ENCODE measurements at regions of chr13 and their contacts with region 1.

Region 1: DNA sequence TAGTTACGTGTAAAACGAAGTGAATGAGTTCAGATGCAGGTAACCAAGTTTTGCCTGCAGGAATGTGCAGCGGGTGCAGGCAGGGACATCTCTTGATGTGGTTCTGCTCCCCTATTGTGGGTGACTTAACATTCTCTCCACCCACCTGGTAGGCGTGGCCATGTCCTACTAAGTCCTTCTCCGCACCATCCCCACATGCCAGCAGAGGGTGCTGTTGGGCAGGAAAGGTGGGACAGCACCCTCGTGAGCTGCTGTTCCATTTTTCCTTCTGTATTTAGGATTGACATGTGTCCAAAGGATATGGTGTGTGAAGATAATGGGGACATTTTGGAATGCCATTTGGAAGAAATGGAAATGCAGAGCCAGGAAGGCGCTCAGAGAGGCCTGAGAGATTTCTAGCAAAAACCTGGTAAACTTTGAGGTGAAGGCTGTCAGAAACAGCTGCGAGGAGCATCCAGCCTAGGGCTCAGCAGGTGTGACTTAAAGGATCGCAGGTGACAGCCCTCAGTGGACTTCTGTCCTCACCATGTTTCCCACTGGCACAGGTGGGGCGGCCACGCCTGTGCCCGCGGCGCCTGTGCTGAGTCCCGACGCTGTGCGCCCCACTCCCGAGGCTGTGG is 26.2 kb upstream of the MCF2L start:
- DNase-seq: peak; percentile 91
- ATAC-seq: peak; percentile 95
- H3K4me3 ChIP-seq: peak overlapping the region; percentile 2; the same call in 1 of the 2 replicates
- H3K27ac ChIP-seq: no peak overlapping the region
- H3K4me1 ChIP-seq: no peaks in the 10 kb centered on the region
- H3K27me3 ChIP-seq: peaks cover 42% of the 10 kb centered on the region
- CTCF ChIP-seq: peak; percentile 97
- POLR2A ChIP-seq: no peak; the same call in 1 of the 2 replicates
- RAD21 ChIP-seq: peak; percentile 93

Region 2: GRCh38 chr13:112917056-112917664 is 25.6 kb before region 1 on chr13:
- CTCF ChIA-PET with region 1: interaction called, 10 read pairs
- POLR2A ChIA-PET with region 1: no interaction called
- dilution Hi-C with region 1: no loop called
- in situ Hi-C with region 1: no loop called
- intact Hi-C with region 1: no loop called
- DNase-seq: no peak
- ATAC-seq: no peak
- H3K4me3 ChIP-seq: no peak overlapping the region
- H3K27ac ChIP-seq: no peak overlapping the region
- H3K4me1 ChIP-seq: no peaks in the 10 kb centered on the region
- H3K27me3 ChIP-seq: peaks cover 50% of the 10 kb centered on the region
- CTCF ChIP-seq: no peak
- POLR2A ChIP-seq: no peak
- RAD21 ChIP-seq: no peak

Region 3: GRCh38 chr13:113029487-113030258 is 86.9 kb after region 1 on chr13:
- CTCF ChIA-PET with region 1: interaction called, 4 read pairs
- POLR2A ChIA-PET with region 1: no interaction called
- dilution Hi-C with region 1: no loop called
- in situ Hi-C with region 1: no loop called
- intact Hi-C with region 1: loop called (anchors 1 kb)
- DNase-seq: no peak
- ATAC-seq: peak; percentile 86
- H3K4me3 ChIP-seq: no peak overlapping the region
- H3K27ac ChIP-seq: no peak overlapping the region
- H3K4me1 ChIP-seq: no peaks in the 10 kb centered on the region
- H3K27me3 ChIP-seq: peaks cover 27% of the 10 kb centered on the region
- CTCF ChIP-seq: peak; percentile 66
- POLR2A ChIP-seq: no peak
- RAD21 ChIP-seq: peak; percentile 48

Region 4: DNA sequence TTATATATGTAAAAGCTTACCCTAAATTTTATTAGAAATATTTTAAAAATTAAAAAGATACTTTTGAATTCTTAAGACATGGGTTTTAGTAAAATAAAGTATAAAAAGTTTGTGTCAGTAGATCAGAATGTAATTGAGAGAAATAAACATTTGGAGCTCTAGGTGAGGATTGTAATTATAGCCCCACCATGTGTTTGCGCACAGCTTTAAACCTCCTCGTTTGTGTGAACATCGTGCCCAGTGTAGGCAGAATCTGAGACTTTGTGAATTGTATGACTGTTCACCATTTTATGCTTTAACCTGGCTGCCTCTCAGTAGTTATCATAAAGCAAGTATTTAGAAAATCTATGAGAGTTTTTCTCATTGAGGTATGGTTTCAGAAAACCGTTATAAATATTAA is 295.7 kb after region 1 on chr13:
- CTCF ChIA-PET with region 1: no interaction called
- POLR2A ChIA-PET with region 1: no interaction called
- dilution Hi-C with region 1: no loop called
- in situ Hi-C with region 1: loop called (anchors 25 kb)
- intact Hi-C with region 1: loop called (anchors 10 kb)
- DNase-seq: no peak
- ATAC-seq: peak; percentile 35; the same call in 1 of the 2 replicates
- H3K4me3 ChIP-seq: no peak overlapping the region
- H3K27ac ChIP-seq: no peak overlapping the region
- H3K4me1 ChIP-seq: no peaks in the 10 kb centered on the region
- H3K27me3 ChIP-seq: no peaks in the 10 kb centered on the region
- CTCF ChIP-seq: peak; percentile 28
- POLR2A ChIP-seq: no peak
- RAD21 ChIP-seq: peak; percentile 20; the same call in 1 of the 2 replicates

Region 5: DNA sequence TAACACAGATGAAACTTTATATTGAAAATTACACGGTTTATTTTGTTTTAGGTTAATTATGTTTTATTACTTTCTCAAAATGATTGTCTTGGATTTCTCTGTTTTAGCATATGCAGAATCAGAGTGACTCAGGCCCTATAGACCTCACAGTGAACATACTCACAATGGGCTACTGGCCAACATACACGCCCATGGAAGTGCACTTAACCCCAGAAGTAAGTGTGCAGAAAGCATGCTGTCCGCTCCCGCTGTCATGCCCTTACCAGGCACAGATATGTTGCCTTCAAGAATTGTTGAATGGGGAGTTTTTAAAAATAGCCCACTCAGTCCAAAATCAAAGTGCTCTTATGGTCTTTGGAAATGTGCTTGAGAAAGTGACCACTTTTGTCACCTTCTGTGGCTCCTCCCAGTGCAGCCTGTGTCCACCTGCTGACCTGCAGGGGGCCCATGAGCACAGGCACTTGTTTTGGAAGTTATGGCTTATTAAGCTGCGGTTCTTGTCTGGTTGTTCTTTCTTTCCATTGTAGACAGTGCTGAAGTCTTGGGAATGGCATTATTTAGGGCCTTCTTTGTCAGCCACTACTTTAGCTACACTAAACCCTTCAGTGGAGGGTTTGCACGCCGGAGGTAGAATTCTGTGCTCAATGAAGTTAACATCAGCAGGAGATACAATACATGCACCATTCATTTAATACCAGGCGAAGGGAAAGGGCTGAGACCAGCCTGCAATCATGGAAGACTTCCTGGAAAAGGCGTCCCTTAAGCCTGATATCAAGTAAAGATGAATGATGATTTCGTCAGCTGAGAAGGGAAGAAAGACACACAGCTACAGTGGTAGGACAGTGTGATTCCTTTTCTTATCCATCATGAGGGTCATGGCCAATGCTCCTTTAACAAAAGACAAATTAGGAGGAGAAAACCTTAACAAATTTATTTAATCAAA is 303.3 kb after region 1 on chr13:
- CTCF ChIA-PET with region 1: no interaction called
- POLR2A ChIA-PET with region 1: no interaction called
- dilution Hi-C with region 1: no loop called
- in situ Hi-C with region 1: loop called (anchors 25 kb)
- intact Hi-C with region 1: no loop called
- DNase-seq: peak; percentile 13
- ATAC-seq: no peak
- H3K4me3 ChIP-seq: no peak overlapping the region
- H3K27ac ChIP-seq: no peak overlapping the region
- H3K4me1 ChIP-seq: no peaks in the 10 kb centered on the region
- H3K27me3 ChIP-seq: no peaks in the 10 kb centered on the region
- CTCF ChIP-seq: 0 out of 2 replicates have a peak, but pooled peaks have one; percentile 16
- POLR2A ChIP-seq: no peak
- RAD21 ChIP-seq: 0 out of 2 replicates have a peak, but pooled peaks have one; percentile 13

Region 6: GRCh38 chr13:113320226-113320875 is 377.6 kb after region 1 on chr13:
- CTCF ChIA-PET with region 1: no interaction called
- POLR2A ChIA-PET with region 1: no interaction called
- dilution Hi-C with region 1: no loop called
- in situ Hi-C with region 1: no loop called
- intact Hi-C with region 1: no loop called
- DNase-seq: no peak
- ATAC-seq: peak; percentile 60
- H3K4me3 ChIP-seq: no peak overlapping the region
- H3K27ac ChIP-seq: no peak overlapping the region
- H3K4me1 ChIP-seq: no peaks in the 10 kb centered on the region
- H3K27me3 ChIP-seq: no peaks in the 10 kb centered on the region
- CTCF ChIP-seq: no peak
- POLR2A ChIP-seq: no peak
- RAD21 ChIP-seq: no peak

Region 7: GRCh38 chr13:113393563-113394338 is 451.0 kb after region 1 on chr13:
- CTCF ChIA-PET with region 1: no interaction called
- POLR2A ChIA-PET with region 1: no interaction called
- dilution Hi-C with region 1: no loop called
- in situ Hi-C with region 1: loop called (anchors 25 kb)
- intact Hi-C with region 1: no loop called
- DNase-seq: peak; percentile 59
- ATAC-seq: peak; percentile 97
- H3K4me3 ChIP-seq: peak overlapping the region; percentile 89
- H3K27ac ChIP-seq: peak overlapping the region; percentile 73
- H3K4me1 ChIP-seq: peaks cover 4% of the 10 kb centered on the region; the same call in 1 of the 2 replicates
- H3K27me3 ChIP-seq: no peaks in the 10 kb centered on the region
- CTCF ChIP-seq: peak; percentile 85
- POLR2A ChIP-seq: no peak
- RAD21 ChIP-seq: peak; percentile 88

Region 8: DNA sequence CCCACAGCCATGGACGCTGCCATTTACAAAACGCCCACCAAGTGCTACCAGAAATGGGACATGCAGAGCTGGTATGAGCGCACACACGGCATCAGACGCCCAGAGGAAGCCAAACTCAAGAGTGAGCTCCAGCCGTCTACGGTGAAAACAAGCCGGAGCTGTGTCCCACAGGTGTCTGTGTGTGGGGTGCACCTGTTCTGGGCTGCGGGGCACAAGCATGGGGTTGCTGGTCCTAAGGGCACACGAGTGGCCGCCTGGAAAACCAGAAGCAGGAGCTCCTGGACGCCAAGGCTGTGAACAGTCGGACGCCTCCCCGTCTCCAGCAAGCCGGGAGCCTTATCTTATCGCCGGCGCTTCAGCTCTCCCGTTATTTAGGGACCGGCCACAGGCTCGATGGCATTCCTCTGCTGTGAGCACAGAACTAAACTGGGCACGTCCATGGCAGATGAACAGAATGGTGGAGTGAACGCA is 509.2 kb after region 1 on chr13:
- CTCF ChIA-PET with region 1: no interaction called
- POLR2A ChIA-PET with region 1: no interaction called
- dilution Hi-C with region 1: no loop called
- in situ Hi-C with region 1: no loop called
- intact Hi-C with region 1: loop called (anchors 2 kb)
- DNase-seq: no peak
- ATAC-seq: no peak
- H3K4me3 ChIP-seq: no peak overlapping the region
- H3K27ac ChIP-seq: no peak overlapping the region
- H3K4me1 ChIP-seq: no peaks in the 10 kb centered on the region
- H3K27me3 ChIP-seq: no peaks in the 10 kb centered on the region
- CTCF ChIP-seq: no peak
- POLR2A ChIP-seq: no peak
- RAD21 ChIP-seq: no peak